CD8-positive, alpha-beta T cell (primary cell): ENCODE measurements at regions of chr19 and their contacts with region 1.

Region 1: DNA sequence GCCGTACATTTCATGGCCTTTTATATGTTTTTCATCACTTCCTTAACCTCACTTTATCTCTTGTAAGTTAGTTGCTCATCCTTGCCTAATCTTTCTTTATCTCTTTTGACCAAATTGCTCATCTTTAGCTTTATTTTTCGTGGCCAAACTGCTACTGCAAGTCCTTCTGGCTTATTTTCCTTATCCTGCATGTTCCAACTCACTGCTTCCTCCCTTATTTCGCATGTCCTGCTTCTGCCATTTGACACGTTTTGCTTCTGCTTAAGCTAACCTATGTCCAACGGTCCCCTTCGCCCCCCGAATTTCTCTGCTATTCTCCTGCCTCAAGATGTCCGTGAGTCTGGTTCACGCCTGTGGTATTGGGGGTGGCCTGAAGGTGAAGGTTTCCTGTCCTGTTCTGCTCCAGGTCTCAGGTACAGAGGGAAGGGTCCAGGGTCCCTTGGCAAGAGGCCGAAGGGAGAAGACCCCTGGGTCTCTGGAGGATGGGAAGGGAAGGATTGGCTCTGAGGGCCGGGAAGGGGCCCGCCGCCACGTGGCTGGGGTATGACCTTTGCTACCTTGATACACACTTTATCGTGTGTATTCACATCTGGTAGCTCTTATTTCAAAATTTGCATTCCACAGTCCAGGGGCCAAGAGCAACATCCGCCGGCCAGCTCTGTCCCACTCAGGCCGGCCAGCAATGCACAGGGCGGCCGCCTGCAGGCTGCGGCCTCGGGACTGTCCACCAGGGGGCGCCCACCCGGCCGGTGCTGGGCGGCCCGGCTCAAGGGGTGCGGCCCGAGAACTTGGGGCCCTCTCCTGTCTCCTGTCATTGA is 2.9 kb upstream of the C19orf85 start:
- DNase-seq: peak; percentile 38 to 83 (median 66)
- ATAC-seq: peak; percentile 95
- H3K4me3 ChIP-seq: no peak overlapping the region
- H3K4me3 Mint-ChIP-seq: no peak overlapping the region
- H3K27ac ChIP-seq: no peak overlapping the region
- H3K27ac Mint-ChIP-seq: no peak overlapping the region
- H3K4me1 ChIP-seq: peaks cover 3% of the 10 kb centered on the region
- H3K4me1 Mint-ChIP-seq: peaks cover 3% of the 10 kb centered on the region
- H3K27me3 ChIP-seq: no peaks in the 10 kb centered on the region
- H3K27me3 Mint-ChIP-seq: no peaks in the 10 kb centered on the region
- CTCF ChIP-seq: peak; percentile 92

Region 2: GRCh38 chr19:55447421-55448174 is 19.8 kb before region 1 on chr19:
- CTCF ChIA-PET with region 1: no interaction called
- POLR2A ChIA-PET with region 1: no interaction called
- intact Hi-C with region 1: no loop called
- DNase-seq: no peak
- ATAC-seq: no peak
- H3K4me3 ChIP-seq: no peak overlapping the region
- H3K4me3 Mint-ChIP-seq: no peak overlapping the region
- H3K27ac ChIP-seq: no peak overlapping the region
- H3K27ac Mint-ChIP-seq: no peak overlapping the region
- H3K4me1 ChIP-seq: peaks cover 13% of the 10 kb centered on the region
- H3K4me1 Mint-ChIP-seq: peaks cover 15% of the 10 kb centered on the region
- H3K27me3 ChIP-seq: peaks cover 24 to 38% of the 10 kb centered on the region in 2 experiments
- H3K27me3 Mint-ChIP-seq: peaks cover 40% of the 10 kb centered on the region
- CTCF ChIP-seq: no peak

Region 3: DNA sequence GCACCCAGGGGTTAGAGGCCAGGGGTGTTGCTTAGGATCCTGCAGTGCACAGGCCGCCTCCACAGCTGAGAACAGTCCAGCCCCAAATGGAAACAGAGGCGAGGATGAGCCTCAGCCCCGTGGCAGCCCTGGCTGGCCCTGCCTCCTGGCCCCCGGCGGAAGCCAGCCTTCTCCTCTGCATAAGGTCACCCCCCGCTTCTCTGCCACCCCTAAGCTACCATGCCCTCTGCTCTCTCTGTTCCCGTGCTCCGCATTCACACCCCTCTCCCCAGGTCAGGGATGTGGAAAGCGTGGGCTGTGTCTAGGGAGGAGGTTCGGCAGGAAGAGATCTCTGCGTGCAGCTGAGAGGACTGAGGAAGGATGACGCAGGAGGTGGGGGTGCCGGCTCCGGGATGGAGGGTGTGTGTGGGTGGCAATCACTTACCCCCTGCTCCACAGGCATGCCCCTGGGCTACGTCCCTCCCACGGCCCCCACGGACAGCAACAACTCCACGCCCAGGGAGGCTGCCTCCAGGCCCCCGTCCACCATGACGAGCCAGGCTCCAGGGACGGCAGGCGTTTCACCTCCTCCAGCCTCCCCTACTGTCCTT is 26.8 kb after region 1 on chr19:
- CTCF ChIA-PET with region 1: interaction called, 12 read pairs
- POLR2A ChIA-PET with region 1: no interaction called
- intact Hi-C with region 1: no loop called
- DNase-seq: no peak
- ATAC-seq: peak; percentile 42
- H3K4me3 ChIP-seq: no peak overlapping the region
- H3K4me3 Mint-ChIP-seq: peak overlapping the region; percentile 55
- H3K27ac ChIP-seq: no peak overlapping the region
- H3K27ac Mint-ChIP-seq: peak overlapping the region; percentile 37
- H3K4me1 ChIP-seq: no peaks in the 10 kb centered on the region
- H3K4me1 Mint-ChIP-seq: peaks cover 2% of the 10 kb centered on the region
- H3K27me3 ChIP-seq: no peaks in the 10 kb centered on the region
- H3K27me3 Mint-ChIP-seq: peaks cover 7% of the 10 kb centered on the region
- CTCF ChIP-seq: no peak